AG04450 (cell line): ENCODE measurements at regions of chr2 and their contacts with region 1.

Region 1: GRCh38 chr2:181891258-181891965 is at the start of gene ITPRID2:
- DNase-seq: peak; percentile 70
- H3K4me3 ChIP-seq: peak within 1 kb of the TSS; percentile 89
- H3K27ac ChIP-seq: peak within 1 kb of the TSS; percentile 80
- H3K27me3 ChIP-seq: no peaks in the 10 kb centered on the region
- CTCF ChIP-seq: no peak
- polyA plus RNA-seq, gene ITPRID2: 101 and 110 TPM in 2 replicates

Region 2: DNA sequence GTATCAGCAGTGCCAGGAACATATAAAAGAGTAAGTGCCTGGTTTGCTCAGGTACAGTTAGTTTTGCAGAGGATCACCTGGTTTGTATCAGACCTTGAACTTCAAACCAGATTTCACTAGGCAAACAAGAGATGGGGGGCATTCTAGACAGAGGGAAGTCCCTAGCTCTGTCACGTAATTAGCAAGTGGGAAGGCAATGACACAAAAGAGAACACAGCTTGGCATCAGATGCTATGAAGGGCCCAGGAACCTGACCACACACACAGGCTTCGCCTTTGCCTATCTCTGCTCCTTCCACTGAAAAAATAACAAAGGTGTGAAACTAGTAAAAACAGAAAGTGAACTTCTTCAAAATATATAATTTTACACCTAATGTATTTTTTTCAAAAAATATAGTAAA is 297.1 kb before region 1 on chr2:
- CTCF ChIA-PET with region 1: no interaction called
- POLR2A ChIA-PET with region 1: no interaction called
- DNase-seq: no peak
- H3K4me3 ChIP-seq: no peak overlapping the region
- H3K27ac ChIP-seq: no peak overlapping the region
- H3K27me3 ChIP-seq: no peaks in the 10 kb centered on the region
- CTCF ChIP-seq: no peak

Region 3: GRCh38 chr2:181614874-181615638 is 276.4 kb before region 1 on chr2:
- CTCF ChIA-PET with region 1: no interaction called
- POLR2A ChIA-PET with region 1: no interaction called
- DNase-seq: no peak
- H3K4me3 ChIP-seq: no peak overlapping the region
- H3K27ac ChIP-seq: no peak overlapping the region
- H3K27me3 ChIP-seq: no peaks in the 10 kb centered on the region
- CTCF ChIP-seq: no peak

Region 4: DNA sequence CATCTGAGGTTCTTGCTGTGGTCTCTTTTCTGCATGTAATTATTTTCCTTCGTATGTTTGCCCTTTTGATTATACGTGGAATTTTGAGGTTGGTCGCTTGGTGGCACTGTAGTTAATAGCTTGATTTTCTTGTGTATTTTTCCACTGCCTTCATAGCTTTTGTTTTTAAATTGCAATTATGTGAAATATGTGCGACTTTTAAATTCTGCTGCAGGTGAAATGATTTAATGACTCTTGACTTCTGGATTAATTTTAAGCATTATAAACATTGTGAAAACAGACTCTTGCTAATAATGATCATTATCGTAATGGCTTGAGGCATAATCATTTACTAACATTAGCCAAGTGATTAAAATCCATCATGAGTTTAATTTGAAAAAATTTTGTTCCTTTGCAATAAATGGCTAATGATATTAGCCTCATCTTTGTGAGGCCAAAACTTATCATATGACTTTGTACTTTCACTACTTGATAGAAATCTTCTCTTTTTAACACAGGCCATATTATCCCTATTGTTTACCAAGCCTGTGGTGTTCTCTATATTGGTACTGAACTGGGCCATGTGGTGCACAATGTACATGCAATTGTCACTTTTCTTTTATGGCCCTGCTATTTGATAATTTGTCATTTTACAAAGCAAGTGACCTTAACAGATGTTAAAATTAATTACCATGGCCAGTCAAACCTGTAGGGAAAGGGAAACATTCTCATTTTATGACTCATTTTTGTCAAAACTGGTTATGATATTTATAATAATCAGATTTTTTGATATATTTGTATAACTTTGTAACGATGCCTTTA is 148.3 kb before region 1 on chr2:
- CTCF ChIA-PET with region 1: interaction called, 122 read pairs
- POLR2A ChIA-PET with region 1: no interaction called
- DNase-seq: peak; percentile 11
- H3K4me3 ChIP-seq: no peak overlapping the region
- H3K27ac ChIP-seq: no peak overlapping the region
- H3K27me3 ChIP-seq: no peaks in the 10 kb centered on the region
- CTCF ChIP-seq: peak; percentile 66

Region 5: DNA sequence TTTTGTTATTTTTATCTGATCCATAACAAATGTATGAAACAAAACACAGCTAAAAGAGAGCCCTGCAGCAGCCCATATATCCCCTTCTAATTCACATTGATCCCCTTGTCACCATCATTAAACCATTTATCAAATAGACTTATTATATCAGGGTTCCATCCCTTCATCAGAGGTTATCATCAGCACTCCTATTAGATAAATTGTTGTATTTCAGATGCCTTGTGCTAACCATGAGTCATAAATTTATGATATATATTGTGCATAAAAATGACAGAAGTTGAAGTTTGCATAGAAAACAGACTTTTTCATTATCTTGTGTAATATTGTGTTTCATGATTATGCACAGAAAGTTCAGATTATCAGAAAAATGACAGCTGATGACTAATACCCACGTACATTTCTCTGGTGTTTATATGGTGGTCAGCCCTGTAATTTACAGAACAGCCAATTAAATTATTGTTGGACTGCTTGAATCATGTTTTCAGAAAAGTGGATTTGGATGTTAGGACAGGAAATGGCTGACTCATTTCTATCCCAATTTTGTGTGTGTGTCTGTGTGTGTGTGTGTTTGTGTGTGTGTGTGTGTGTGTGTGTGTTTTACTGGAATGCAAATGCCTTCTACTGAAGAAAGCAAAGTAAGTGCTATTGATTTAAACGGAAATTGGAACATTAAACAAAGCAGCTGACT is 175.1 kb after region 1 on chr2:
- CTCF ChIA-PET with region 1: no interaction called
- POLR2A ChIA-PET with region 1: no interaction called
- DNase-seq: peak; percentile 86
- H3K4me3 ChIP-seq: no peak overlapping the region
- H3K27ac ChIP-seq: no peak overlapping the region
- H3K27me3 ChIP-seq: no peaks in the 10 kb centered on the region
- CTCF ChIP-seq: no peak